ENCODE measurements at regions of chr1 and their contacts with region 1.

Region 1: GRCh38 chr1:38818175-38818976 is 41.2 kb downstream of the RRAGC start:
- DNase-seq: peak in 1 of 5 donors; percentile 74
- ATAC-seq: peak in 2 of 4 donors; percentile 68 to 76
- H3K4me3 ChIP-seq: peak overlapping the region; percentile 9 to 42 (median 24)
- H3K27ac ChIP-seq: no peak overlapping the region
- H3K4me1 ChIP-seq: peaks cover 3 to 12% (median 8%) of the 10 kb centered on the region in 12 donors
- H3K27me3 ChIP-seq: peaks cover 35 to 75% (median 58%) of the 10 kb centered on the region in 9 donors
- CTCF ChIP-seq: peak; percentile 57 to 92 (median 82)
- POLR2A ChIP-seq: no peak

Region 2: DNA sequence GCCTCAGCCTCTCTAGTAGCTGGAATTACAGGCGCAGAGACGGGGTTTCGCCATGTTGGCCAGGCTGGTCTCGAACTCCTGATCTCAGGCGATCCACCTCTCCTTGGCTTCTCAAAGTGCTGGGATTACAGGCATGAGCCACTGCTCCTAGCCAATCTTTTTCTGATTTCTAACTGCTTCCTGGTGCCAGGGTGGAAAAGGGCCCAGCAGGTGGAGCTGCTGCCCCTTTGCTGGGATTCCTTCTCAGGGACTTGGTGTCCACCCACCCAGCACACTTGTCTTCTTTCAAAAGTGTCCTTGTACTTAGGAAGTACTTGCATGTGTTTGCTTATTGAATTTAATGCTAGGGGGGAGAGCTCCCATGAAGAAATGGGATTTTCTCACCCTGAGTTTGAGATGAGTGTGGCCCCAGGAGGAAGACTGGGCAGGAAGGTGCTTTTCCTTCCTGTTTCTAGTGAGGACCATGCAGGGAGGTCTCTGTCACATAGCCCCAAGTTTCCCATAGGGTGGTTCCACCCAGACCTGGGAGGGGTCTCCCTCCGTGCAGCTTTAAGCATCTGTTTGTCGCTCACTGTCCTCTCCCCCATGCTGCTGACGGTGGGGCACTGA is 791.7 kb before region 1 on chr1:
- intact Hi-C with region 1: loop called in 2 of 10 experiments (anchors 5 kb)
- DNase-seq: no peak
- ATAC-seq: no peak
- H3K4me3 ChIP-seq: no peak overlapping the region
- H3K27ac ChIP-seq: no peak overlapping the region
- H3K4me1 ChIP-seq: peaks cover 0 to 40% (median 21%) of the 10 kb centered on the region in 12 donors
- H3K27me3 ChIP-seq: no peaks in the 10 kb centered on the region
- CTCF ChIP-seq: peak; percentile 37 to 63 (median 51)
- POLR2A ChIP-seq: no peak

Region 3: DNA sequence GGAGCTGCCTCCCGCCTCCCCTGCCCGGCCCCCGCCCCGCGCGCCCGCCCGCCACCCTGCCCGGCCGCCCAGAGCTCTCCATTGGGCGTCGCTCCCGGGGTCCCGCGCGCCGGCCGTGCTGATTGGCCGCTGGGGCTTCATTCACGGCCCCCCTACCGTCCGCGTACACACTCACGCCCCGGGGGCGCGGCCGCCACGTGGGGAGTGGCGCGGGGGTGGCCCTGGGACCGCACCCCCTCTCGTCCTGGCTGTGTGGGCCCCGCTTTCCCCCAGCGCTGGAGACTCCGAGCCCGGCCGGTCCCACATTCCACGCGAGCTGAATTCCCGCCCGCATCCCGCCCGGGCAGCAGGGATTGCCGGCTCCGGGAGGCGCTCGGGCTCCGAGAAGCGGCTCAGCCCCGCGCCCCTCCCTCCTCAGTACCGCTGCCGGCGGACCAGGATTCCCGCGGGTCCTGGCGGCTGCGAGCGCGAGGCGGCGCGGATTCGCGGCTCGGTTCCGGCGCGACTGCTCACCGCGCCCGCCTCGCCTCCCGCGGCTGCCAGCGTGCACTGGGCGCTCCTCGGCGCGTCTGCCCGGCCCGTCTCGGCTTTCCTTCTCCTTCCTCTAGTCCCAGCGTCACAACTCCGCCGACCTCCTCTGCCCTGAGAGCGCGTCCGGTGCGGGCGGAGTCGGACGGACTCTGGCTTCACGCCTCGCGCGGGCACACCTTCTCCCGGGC is 771.3 kb before region 1 on chr1:
- intact Hi-C with region 1: loop called in 2 of 10 experiments (anchors 5 to 10 kb)
- DNase-seq: peak; percentile 86 to 94 (median 91)
- ATAC-seq: peak; percentile 93 to 97 (median 96)
- H3K4me3 ChIP-seq: peak overlapping the region; percentile 30 to 82 (median 66)
- H3K27ac ChIP-seq: peak overlapping the region in 4 of 12 donors; percentile 13 to 72 (median 55)
- H3K4me1 ChIP-seq: peaks cover 3 to 38% (median 19%) of the 10 kb centered on the region in 12 donors
- H3K27me3 ChIP-seq: peaks cover 31 to 65% (median 37%) of the 10 kb centered on the region in 9 donors
- CTCF ChIP-seq: peak in 5 of 12 donors; percentile 13 to 35 (median 23)
- POLR2A ChIP-seq: no peak

Region 4: GRCh38 chr1:38360807-38361206 is 457.6 kb before region 1 on chr1:
- intact Hi-C with region 1: loop called in 1 of 10 experiments (anchors 10 kb)
- DNase-seq: no peak
- ATAC-seq: no peak
- H3K4me3 ChIP-seq: no peak overlapping the region
- H3K27ac ChIP-seq: no peak overlapping the region
- H3K4me1 ChIP-seq: no peaks in the 10 kb centered on the region
- H3K27me3 ChIP-seq: peaks cover 0 to 4% (median 0%) of the 10 kb centered on the region in 9 donors
- CTCF ChIP-seq: no peak
- POLR2A ChIP-seq: no peak

Region 5: DNA sequence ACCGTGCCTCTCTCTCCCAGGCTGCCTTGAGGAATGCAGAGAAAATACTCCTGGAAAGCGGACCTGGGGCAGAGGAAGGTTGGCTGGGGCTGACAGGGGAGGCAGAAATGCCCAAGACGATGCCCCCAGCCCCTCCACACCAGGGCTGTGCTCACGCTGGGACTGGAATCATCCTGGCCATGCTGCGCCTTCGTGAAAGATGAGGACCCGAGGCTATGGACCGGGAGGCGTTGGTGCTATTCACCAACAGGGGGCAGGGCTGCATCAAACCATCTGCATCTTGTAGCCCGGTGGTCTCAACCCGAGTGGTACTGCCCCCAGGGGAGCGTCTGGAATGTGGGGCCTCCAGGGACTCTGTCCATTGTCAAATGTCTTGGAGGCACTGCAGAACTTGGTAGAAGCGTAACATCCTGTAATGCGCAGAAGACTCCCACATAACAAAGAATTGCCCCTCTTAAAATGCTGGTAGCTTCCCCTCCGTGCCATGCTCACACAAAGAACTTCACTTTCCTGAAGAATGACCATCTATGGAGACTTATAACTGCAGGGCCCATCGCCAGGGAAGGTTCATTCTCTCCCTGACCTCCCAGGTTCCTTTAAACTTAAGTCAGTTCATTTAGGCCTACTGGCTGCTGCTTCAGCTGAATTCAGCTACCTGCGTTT is 210.0 kb before region 1 on chr1:
- intact Hi-C with region 1: loop called (anchors 1 to 5 kb)
- DNase-seq: peak in 3 of 5 donors; percentile 22 to 36 (median 36)
- ATAC-seq: peak in 2 of 4 donors; percentile 37 to 60
- H3K4me3 ChIP-seq: no peak overlapping the region
- H3K27ac ChIP-seq: no peak overlapping the region
- H3K4me1 ChIP-seq: no peaks in the 10 kb centered on the region
- H3K27me3 ChIP-seq: peaks cover 0 to 27% (median under 1%) of the 10 kb centered on the region in 9 donors
- CTCF ChIP-seq: peak; percentile 33 to 72 (median 44)
- POLR2A ChIP-seq: no peak

Region 6: GRCh38 chr1:38613996-38614395 is 204.4 kb before region 1 on chr1:
- intact Hi-C with region 1: loop called in 9 of 10 experiments (anchors 2 to 5 kb)
- DNase-seq: peak in 1 of 5 donors; percentile 40
- ATAC-seq: peak in 1 of 4 donors; percentile 59
- H3K4me3 ChIP-seq: no peak overlapping the region
- H3K27ac ChIP-seq: peak overlapping the region in 3 of 12 donors; percentile 13 to 38 (median 37)
- H3K4me1 ChIP-seq: peaks cover 0 to 13% (median 1%) of the 10 kb centered on the region in 12 donors
- H3K27me3 ChIP-seq: peaks cover 0 to 16% (median 4%) of the 10 kb centered on the region in 9 donors
- CTCF ChIP-seq: no peak
- POLR2A ChIP-seq: no peak

Region 7: DNA sequence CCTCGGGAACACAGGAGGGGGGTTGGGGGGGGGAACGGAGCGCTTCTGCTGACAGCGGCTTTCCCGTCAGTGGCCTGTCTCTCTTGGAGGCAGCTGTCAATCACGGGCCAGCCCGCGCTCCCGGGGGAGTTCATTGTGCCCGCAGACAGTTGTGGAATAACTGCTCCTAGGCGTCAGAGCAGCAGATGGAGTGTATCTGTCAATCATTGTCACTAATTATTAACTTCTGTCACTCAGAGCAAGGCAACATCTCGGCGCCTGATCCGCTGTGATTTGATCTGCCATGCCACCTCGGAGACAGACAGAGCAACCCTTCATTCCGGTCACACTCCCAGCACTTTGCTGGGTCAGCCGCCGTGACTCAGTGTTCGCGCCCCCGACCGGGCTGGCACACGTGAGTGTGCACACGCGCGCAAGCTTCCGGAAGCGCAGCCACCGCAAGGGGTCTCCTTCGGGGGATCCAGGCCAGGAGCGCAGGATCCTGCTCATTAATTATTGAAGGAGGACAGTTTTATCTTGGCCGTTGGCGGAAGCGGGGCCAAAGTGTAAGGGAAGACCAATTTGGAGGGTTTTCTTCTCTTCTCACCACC is 34.6 kb before region 1 on chr1:
- intact Hi-C with region 1: no loop called
- DNase-seq: no peak
- ATAC-seq: no peak
- H3K4me3 ChIP-seq: no peak overlapping the region
- H3K27ac ChIP-seq: no peak overlapping the region
- H3K4me1 ChIP-seq: peaks cover 0 to 7% (median 0%) of the 10 kb centered on the region in 12 donors
- H3K27me3 ChIP-seq: peaks cover 0 to 92% (median 48%) of the 10 kb centered on the region in 9 donors
- CTCF ChIP-seq: no peak
- POLR2A ChIP-seq: no peak

Measured in heart left ventricle (tissue), 16 donors.